ENCODE measurements at regions of chr19 and their contacts with region 1.

Region 1: DNA sequence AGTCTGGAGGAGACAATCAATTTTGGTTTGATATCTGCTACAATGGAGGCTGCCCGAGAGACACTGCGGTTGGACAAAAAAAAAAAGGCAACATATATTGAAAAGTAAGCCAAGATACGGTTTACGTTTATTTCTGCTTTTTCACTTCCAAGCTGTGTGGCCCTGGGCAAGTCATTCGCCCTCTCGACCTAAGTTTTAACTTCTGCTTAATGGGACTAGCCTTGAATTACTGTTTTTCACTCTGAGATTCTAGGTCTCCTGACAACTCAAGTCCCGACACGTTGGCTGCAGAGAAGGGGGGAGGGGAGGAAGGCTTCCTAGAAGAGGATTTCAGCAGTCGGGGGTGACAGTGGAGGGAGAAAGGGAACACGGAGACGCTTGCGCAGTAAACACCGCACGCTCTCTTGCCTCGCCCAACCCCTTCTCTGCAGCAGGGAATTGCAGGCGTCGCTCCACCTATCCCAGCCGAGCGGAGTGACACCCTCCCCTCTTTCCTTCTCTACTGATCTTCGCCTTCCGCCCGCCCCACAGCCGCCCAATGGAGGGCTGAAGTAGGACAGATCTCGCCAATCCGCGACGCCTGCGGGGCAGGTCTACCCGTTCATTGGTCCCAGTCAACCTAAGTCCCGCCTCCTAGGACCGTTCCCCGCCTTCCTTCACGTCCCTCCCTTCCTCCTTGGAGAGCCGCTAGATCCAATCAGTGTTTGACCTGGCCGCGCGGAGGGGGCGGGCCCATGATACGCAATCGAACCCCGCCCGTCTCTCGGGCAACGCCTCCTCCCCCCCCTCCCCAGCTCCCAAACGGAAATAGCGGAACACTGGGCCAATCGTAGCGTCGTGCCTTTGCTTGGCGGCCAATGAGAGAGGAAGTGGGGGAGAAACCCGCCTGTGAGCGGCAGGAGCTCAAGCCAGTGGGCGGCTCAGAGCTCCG is 529 bp upstream of the AP2A1 start:
- DNase-seq: peak; percentile 100
- ATAC-seq: peak; percentile 91
- H3K4me3 ChIP-seq: peak overlapping the region; percentile 62
- H3K27ac ChIP-seq: peak overlapping the region; percentile 90
- H3K4me1 ChIP-seq: peaks cover 23% of the 10 kb centered on the region
- H3K27me3 ChIP-seq: no peaks in the 10 kb centered on the region
- CTCF ChIP-seq: no peak

Region 2: DNA sequence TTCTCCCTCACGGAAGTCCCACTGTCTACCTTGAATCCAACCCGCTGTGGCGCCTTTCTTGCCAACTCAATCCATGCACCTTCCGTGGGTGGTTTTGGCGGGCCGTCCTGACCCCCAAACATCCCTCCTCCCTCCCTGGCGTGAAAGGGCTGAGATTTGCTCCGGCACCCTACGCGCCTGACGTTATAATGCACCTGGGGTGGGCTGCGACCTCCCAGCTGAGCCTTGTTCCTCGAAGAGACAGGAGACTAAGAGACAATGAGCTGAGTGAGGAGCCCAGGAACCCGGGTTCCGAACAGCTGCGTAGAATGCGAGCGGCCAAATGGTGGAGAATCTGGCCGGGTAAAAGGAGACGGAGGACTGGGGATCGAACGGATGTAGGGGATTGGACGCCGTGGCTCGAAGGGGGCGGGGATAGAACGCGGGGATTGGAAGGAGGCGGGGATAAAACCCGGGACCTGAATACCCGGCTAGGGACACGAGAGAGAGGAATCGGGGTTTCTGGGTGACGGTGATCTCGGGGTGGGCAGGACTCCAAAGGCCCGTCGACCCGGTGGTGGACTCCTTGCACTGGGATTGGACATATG is 75.5 kb before region 1 on chr19 and contains the start of gene CPT1C:
- CTCF ChIA-PET with region 1: interaction called, 3 read pairs
- POLR2A ChIA-PET with region 1: no interaction called
- intact Hi-C with region 1: loop called (anchors 2 kb)
- DNase-seq: peak; percentile 90
- ATAC-seq: peak; percentile 73
- H3K4me3 ChIP-seq: peak within 1 kb of the TSS; percentile 82
- H3K27ac ChIP-seq: no peak within 1 kb of the TSS
- H3K4me1 ChIP-seq: peaks cover 19% of the 10 kb centered on the region
- H3K27me3 ChIP-seq: no peaks in the 10 kb centered on the region
- CTCF ChIP-seq: no peak
- total RNA-seq, gene CPT1C: 11.5 and 13.6 TPM in 2 replicates

Region 3: DNA sequence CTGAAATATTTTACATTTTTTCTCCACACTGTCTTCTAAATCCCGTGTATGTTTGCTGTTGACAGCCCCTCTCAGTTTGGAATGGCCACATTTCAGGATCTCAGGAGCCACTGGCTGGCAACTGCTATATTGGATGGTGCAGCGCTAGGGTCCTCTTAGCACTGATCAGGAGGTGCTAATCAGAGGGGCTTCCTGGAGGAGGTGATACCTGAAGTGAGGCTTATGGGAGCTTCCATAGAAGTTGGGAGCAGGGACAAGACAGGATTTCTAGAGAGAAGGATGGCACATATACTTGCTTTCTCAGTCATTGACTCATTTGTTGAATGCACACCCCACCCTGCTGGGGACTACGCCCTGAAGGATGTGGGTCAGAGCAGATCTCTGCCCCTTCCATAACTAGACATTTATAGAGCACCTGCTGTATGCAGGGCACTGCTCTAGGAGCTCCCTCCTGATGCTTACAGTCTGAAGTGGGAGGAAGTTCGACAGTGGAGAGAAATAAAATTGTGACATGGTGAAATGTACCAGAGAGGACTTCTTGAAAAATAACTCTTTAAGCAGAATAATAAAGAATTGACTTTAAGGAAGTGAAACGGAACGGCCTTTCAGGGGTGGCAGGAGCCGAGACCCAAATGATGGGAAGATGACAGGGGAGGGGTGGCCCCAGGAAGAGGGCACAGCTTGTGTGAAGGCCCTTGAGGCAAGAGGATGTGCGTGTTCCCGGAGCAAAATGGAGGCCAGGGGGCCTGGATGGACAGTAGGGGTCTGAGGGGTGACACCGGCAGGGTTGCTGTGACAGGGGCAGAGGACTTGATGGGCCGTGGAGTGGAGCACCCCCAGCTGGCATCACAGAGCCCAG is 13.7 kb after region 1 on chr19:
- CTCF ChIA-PET with region 1: no interaction called
- POLR2A ChIA-PET with region 1: no interaction called
- intact Hi-C with region 1: no loop called
- DNase-seq: no peak
- ATAC-seq: no peak
- H3K4me3 ChIP-seq: no peak overlapping the region
- H3K27ac ChIP-seq: no peak overlapping the region
- H3K4me1 ChIP-seq: no peaks in the 10 kb centered on the region
- H3K27me3 ChIP-seq: no peaks in the 10 kb centered on the region
- CTCF ChIP-seq: no peak

Region 4: DNA sequence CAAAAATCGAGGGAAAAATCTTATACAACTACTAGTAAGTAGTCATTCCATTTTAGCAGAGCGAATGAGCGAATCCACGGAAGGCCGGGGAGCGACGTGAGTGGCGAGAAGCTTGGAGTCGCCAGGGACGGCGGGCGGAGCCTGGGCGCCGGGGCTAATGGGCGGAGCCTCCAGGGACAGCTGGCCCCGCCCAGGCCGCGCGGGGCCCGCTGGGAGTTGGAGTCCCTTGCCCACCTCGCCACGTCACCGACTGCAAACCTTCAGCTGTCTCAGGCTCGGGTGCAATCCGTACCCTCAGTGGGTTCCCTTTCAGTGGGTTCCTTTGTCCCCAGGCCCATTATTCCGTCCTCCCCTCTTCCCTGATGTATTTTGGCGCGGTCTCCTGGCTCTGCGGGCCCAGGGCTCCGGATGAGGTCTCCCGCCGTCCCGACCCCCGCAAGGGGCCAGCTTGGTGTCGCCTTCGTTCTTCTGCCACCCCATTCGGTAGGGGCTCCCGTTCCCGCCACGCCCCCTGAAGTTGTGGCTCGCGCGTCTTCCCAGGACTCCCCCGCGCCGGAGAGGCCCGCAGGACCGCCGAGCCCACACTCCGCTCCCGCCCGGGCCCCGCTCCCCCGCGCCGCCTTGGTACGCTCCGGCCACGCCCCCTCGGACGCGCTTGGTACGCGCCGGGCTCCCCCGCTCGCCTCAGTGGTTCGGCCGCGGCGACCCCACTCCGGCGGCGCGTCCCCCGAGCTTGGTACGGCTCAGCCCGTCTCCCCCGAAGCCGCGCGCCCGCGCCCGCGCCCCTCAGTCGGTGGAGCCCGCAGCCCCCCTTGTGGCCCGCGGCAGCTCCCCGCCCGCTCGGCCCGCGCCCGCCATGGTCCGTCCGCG is 84.4 kb after region 1 on chr19 and contains the start of gene PTOV1:
- CTCF ChIA-PET with region 1: interaction called, 4 read pairs
- POLR2A ChIA-PET with region 1: no interaction called
- intact Hi-C with region 1: loop called (anchors 5 kb)
- DNase-seq: peak; percentile 97
- ATAC-seq: peak; percentile 75
- H3K4me3 ChIP-seq: peak within 1 kb of the TSS; percentile 86
- H3K27ac ChIP-seq: peak within 1 kb of the TSS; percentile 91
- H3K4me1 ChIP-seq: peaks cover 37% of the 10 kb centered on the region
- H3K27me3 ChIP-seq: no peaks in the 10 kb centered on the region
- CTCF ChIP-seq: no peak
- total RNA-seq, gene PTOV1: 138 and 148 TPM in 2 replicates

Measured in PC-3 (cell line).